ENCODE measurements at regions of chr12 and their contacts with region 1.

Region 1: GRCh38 chr12:18250313-18250916 is 10.9 kb upstream of the PIK3C2G start:
- DNase-seq: no peak
- ATAC-seq: peak; percentile 44; the same call in 1 of the 3 replicates
- H3K4me3 ChIP-seq: no peak overlapping the region
- H3K27ac ChIP-seq: no peak overlapping the region
- H3K4me1 ChIP-seq: no peaks in the 10 kb centered on the region
- H3K27me3 ChIP-seq: no peaks in the 10 kb centered on the region
- CTCF ChIP-seq: peak; percentile 50 to 63 (median 54)
- EP300 ChIP-seq: no peak
- POLR2A ChIP-seq: no peak
- RAD21 ChIP-seq: peak; percentile 60

Region 2: GRCh38 chr12:18261253-18261652 is 10.8 kb after region 1 on chr12 and contains the start of gene PIK3C2G:
- CTCF ChIA-PET with region 1: interaction called, 14 read pairs
- POLR2A ChIA-PET with region 1: no interaction called
- RAD21 ChIA-PET with region 1: interaction called, 3 read pairs
- SMC1A ChIA-PET with region 1: interaction called, 4 read pairs
- in situ Hi-C with region 1: no loop called
- intact Hi-C with region 1: no loop called
- DNase-seq: no peak
- ATAC-seq: no peak
- H3K4me3 ChIP-seq: no peak within 1 kb of the TSS
- H3K27ac ChIP-seq: no peak within 1 kb of the TSS
- H3K4me1 ChIP-seq: no peaks in the 10 kb centered on the region
- H3K27me3 ChIP-seq: no peaks in the 10 kb centered on the region
- CTCF ChIP-seq: no peak
- EP300 ChIP-seq: no peak
- POLR2A ChIP-seq: no peak
- RAD21 ChIP-seq: no peak
- polyA plus RNA-seq, gene PIK3C2G: not detected

Region 3: DNA sequence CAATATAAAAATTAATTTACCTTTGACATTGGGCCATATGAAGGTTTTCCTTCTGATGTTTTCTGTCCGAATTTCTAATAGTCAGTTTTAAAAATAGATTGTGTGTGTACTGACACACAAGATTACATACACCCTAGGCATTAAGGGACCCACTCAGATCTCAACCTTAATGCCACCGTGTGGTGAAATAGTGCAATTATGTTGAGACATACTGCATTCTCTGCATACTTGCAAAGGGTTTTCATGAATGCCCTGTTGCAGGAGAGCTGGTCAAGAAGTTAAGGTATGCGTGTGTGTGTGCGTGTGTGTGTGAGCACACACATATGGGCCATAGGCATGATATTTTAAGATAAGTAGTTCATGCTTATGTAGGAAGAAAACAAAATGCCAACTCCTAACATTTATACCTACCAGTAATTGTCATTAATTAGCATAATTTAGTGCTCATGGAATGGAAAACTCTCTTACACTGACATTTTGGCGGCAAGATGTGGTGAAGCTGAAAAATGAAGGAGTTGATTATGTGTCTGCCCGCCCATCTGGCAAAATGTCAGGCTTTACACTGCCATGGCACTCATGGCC is 69.7 kb after region 1 on chr12:
- CTCF ChIA-PET with region 1: interaction called, 17 read pairs
- POLR2A ChIA-PET with region 1: no interaction called
- RAD21 ChIA-PET with region 1: interaction called, 9 read pairs
- SMC1A ChIA-PET with region 1: interaction called, 20 read pairs
- in situ Hi-C with region 1: no loop called
- intact Hi-C with region 1: loop called (anchors 1 kb)
- DNase-seq: no peak
- ATAC-seq: peak; percentile 90
- H3K4me3 ChIP-seq: no peak overlapping the region
- H3K27ac ChIP-seq: no peak overlapping the region
- H3K4me1 ChIP-seq: no peaks in the 10 kb centered on the region
- H3K27me3 ChIP-seq: no peaks in the 10 kb centered on the region
- CTCF ChIP-seq: peak; percentile 26 to 45 (median 42); a peak in 4 of 6 replicates
- EP300 ChIP-seq: no peak
- POLR2A ChIP-seq: no peak
- RAD21 ChIP-seq: peak; percentile 43; the same call in 1 of the 2 replicates

Region 4: GRCh38 chr12:18462442-18462841 is 212.0 kb after region 1 on chr12:
- CTCF ChIA-PET with region 1: no interaction called
- POLR2A ChIA-PET with region 1: no interaction called
- RAD21 ChIA-PET with region 1: no interaction called
- SMC1A ChIA-PET with region 1: no interaction called
- in situ Hi-C with region 1: no loop called
- intact Hi-C with region 1: no loop called
- DNase-seq: no peak
- ATAC-seq: no peak
- H3K4me3 ChIP-seq: no peak overlapping the region
- H3K27ac ChIP-seq: no peak overlapping the region
- H3K4me1 ChIP-seq: no peaks in the 10 kb centered on the region
- H3K27me3 ChIP-seq: no peaks in the 10 kb centered on the region
- CTCF ChIP-seq: no peak
- EP300 ChIP-seq: no peak
- POLR2A ChIP-seq: no peak
- RAD21 ChIP-seq: no peak

Region 5: DNA sequence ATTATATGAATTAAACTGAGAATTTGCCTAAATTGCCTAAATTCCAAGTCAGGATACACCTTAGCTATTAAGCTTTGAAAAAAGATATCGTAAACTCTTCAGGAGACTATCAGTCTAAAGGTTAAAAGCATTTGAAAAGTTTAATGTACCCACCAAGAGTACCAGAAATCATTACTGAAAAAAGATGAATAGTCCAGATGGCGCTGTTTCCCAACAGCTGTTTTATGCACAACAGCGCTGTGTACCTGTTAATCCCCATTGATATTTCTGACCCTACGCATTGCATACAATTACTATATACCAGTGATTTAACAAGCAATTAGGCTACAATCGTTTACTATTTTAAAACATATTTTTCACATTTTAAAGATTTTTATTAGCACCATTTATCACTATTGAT is 302.4 kb after region 1 on chr12:
- CTCF ChIA-PET with region 1: no interaction called
- POLR2A ChIA-PET with region 1: no interaction called
- RAD21 ChIA-PET with region 1: no interaction called
- SMC1A ChIA-PET with region 1: no interaction called
- in situ Hi-C with region 1: no loop called
- intact Hi-C with region 1: loop called (anchors 10 kb)
- DNase-seq: no peak
- ATAC-seq: no peak
- H3K4me3 ChIP-seq: no peak overlapping the region
- H3K27ac ChIP-seq: no peak overlapping the region
- H3K4me1 ChIP-seq: no peaks in the 10 kb centered on the region
- H3K27me3 ChIP-seq: no peaks in the 10 kb centered on the region; a peak in 1 of 4 replicates
- CTCF ChIP-seq: no peak
- EP300 ChIP-seq: no peak
- POLR2A ChIP-seq: no peak
- RAD21 ChIP-seq: no peak

Region 6: GRCh38 chr12:19186722-19187661 is 936.6 kb after region 1 on chr12:
- CTCF ChIA-PET with region 1: interaction called, 13 read pairs
- POLR2A ChIA-PET with region 1: no interaction called
- RAD21 ChIA-PET with region 1: interaction called, 8 read pairs
- SMC1A ChIA-PET with region 1: interaction called, 5 read pairs
- in situ Hi-C with region 1: loop called (anchors 10 kb)
- intact Hi-C with region 1: loop called (anchors 2 kb)
- DNase-seq: no peak
- ATAC-seq: peak; percentile 53; the same call in 2 of the 3 replicates
- H3K4me3 ChIP-seq: no peak overlapping the region
- H3K27ac ChIP-seq: no peak overlapping the region
- H3K4me1 ChIP-seq: no peaks in the 10 kb centered on the region
- H3K27me3 ChIP-seq: no peaks in the 10 kb centered on the region
- CTCF ChIP-seq: peak in 2 of 3 experiments; percentile 40 to 52; a peak in 4 of 6 replicates
- EP300 ChIP-seq: no peak
- POLR2A ChIP-seq: no peak
- RAD21 ChIP-seq: peak; percentile 63